Activated CD8-positive, alpha-beta T cell treated with anti-CD3 and anti-CD28 coated beads, Interleukin-2, amount 10 ng/mL, durations not matched to agents 7 days and 5 days (primary cell): ENCODE measurements at regions of chr6 and their contacts with region 1.

Region 1: DNA sequence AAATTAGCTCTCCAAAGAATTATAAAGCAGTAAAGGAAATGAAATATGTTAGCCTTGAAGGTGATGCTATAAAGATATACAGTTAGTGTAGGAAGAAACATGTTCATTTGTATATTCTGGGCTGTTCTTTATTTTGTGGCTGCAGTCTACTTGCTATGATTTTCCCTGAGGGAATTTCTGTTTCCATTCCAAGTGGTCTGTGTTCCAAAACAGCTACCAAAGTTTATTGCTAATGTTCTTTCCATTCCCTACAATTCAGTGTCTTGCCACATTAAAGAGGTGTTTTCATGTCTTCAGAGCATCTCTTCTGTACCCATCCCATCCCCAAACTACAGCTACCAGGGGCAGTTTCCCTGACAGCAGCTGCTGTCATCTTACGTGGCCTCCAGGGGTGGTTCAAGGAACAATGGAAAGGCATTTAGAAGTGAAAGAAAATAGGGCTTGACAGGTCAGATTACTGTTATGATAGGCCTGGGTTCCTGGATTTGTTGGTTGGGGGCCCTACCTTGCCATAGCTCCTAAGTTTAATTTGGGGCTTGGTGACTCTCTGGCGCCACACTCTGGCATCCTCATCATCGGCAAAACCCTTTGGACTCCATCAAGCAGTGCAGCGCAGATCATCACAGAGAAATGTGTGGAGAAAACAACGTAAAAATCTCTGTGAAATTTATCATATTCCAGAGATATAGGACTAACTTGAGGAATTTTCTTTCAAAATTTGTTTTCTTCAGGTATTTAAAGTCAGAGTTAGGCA is 33.8 kb upstream of the AIG1 start:
- DNase-seq: peak; percentile 54
- ATAC-seq: peak; percentile 64
- H3K4me3 Mint-ChIP-seq: no peak overlapping the region
- H3K27ac Mint-ChIP-seq: no peak overlapping the region
- H3K4me1 Mint-ChIP-seq: no peaks in the 10 kb centered on the region
- H3K27me3 Mint-ChIP-seq: no peaks in the 10 kb centered on the region

Region 2: DNA sequence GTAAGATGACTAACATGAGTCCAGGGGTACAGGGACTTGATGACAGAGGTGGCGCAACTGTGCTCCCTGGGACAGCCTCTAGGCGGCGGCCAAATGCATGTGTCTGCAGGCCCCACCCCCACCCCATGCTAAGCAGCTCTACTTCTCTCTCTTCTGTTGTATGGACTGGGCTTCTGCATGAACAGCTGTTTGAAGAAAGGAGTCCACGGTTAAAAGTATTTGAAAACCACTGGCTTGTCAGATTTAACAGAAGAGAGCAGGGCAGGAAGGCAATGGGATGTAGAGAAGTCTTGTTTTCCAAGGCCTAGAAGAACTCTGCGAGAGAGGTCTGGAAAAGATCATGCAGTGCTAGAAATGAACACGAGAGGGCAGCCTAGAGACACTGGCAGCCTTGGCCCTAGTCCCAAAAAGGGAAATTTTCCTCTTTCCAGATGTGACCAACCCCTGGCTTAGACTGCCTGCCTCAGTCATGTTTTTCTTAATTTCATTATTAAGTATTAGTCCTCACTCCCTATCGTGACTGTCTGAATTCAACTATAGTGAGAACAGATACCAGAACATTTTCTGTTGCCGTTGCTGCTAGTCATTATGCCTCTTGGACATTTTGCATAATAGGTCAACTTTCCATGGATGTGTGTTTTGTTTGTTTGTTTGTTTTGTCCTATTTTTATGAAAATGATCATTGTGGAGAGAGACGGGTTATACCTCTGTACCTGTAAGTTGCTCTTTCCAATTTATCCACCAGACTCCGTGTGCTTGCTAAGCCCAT is 460.1 kb before region 1 on chr6:
- CTCF ChIA-PET with region 1: interaction called, 10 read pairs
- POLR2A ChIA-PET with region 1: no interaction called
- DNase-seq: peak; percentile 63
- ATAC-seq: peak; percentile 55
- H3K4me3 Mint-ChIP-seq: no peak overlapping the region
- H3K27ac Mint-ChIP-seq: no peak overlapping the region
- H3K4me1 Mint-ChIP-seq: peaks cover 37% of the 10 kb centered on the region
- H3K27me3 Mint-ChIP-seq: no peaks in the 10 kb centered on the region

Region 3: DNA sequence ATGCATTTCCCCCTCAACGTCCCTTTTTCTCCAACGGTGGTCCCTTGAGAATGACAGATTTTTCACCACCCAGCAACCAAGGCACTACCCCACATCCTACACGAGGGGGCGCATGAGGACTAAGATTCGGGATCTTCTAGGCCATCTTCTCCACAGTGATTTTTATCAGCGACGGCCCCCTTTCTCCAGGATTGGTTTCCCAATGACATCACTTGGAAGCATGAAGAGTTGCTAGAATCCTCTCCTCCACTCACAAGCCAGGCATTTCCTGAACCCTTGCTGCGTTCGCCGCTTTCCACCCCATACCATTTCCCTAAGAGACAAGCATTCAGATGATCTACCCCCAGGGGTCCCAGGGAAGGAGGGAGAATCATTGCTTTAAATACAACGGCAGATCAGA is 333.9 kb before region 1 on chr6:
- CTCF ChIA-PET with region 1: interaction called, 45 read pairs
- POLR2A ChIA-PET with region 1: no interaction called
- DNase-seq: peak; percentile 74
- ATAC-seq: peak; percentile 82
- H3K4me3 Mint-ChIP-seq: no peak overlapping the region
- H3K27ac Mint-ChIP-seq: no peak overlapping the region
- H3K4me1 Mint-ChIP-seq: peaks cover 12% of the 10 kb centered on the region
- H3K27me3 Mint-ChIP-seq: no peaks in the 10 kb centered on the region

Region 4: GRCh38 chr6:142952614-142953013 is 74.3 kb before region 1 on chr6:
- CTCF ChIA-PET with region 1: interaction called, 10 read pairs
- POLR2A ChIA-PET with region 1: no interaction called
- DNase-seq: no peak
- ATAC-seq: no peak
- H3K4me3 Mint-ChIP-seq: no peak overlapping the region
- H3K27ac Mint-ChIP-seq: no peak overlapping the region
- H3K4me1 Mint-ChIP-seq: peaks cover 10% of the 10 kb centered on the region
- H3K27me3 Mint-ChIP-seq: no peaks in the 10 kb centered on the region

Region 5: DNA sequence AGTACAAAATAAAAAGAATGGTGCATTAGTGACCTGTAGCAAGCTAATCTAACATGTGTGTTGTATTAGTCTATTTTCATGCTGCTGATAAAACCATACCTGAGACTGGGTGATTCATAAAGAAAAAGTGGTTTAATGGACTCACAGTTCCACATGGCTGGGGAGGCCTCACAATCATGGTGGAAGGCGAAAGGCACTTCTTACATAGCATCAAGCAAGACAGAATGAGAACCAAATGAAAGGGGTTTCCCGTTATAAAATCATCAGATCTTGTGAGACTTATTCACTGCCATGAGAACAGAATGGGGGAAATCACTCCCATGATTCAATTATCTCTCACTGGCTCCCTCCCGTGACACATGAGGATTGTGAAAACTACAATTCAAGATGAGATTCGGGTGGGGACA is 11.6 kb before region 1 on chr6:
- CTCF ChIA-PET with region 1: interaction called, 11 read pairs
- POLR2A ChIA-PET with region 1: no interaction called
- DNase-seq: no peak
- ATAC-seq: no peak
- H3K4me3 Mint-ChIP-seq: no peak overlapping the region
- H3K27ac Mint-ChIP-seq: no peak overlapping the region
- H3K4me1 Mint-ChIP-seq: no peaks in the 10 kb centered on the region
- H3K27me3 Mint-ChIP-seq: peaks cover 4% of the 10 kb centered on the region